OCI-LY7 (cell line): ENCODE measurements at regions of chr20 and their contacts with region 1.

Region 1: DNA sequence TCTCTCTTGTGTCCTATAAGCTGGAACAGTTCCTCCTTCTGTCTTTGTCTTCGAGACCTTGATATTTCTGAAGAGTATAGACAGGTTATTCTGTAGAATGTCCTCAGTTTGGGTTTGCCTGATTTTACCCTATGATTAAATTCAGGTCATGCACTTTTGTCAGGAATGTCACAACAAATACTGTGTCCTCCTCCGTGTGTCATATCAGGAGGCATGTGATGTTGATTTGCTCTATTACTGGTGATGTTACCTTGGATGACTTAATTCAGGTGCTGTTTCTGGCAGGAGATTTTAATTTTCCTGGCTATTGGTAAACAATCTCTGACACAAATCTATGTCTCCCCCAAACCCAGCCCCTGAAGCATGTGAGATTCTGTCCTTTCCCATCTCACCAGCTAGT is 33.3 kb upstream of the CHMP4B start:
- DNase-seq: peak; percentile 20
- H3K4me3 ChIP-seq: no peak overlapping the region
- H3K27ac ChIP-seq: peak overlapping the region; percentile 96
- H3K4me1 ChIP-seq: peaks cover 46% of the 10 kb centered on the region
- CTCF ChIP-seq: no peak

Region 2: GRCh38 chr20:33686100-33686983 is 91.5 kb before region 1 on chr20 and contains the start of gene E2F1:
- CTCF ChIA-PET with region 1: no interaction called
- POLR2A ChIA-PET with region 1: interaction called, 3 read pairs
- intact Hi-C with region 1: loop called (anchors 2 kb)
- DNase-seq: peak; percentile 97
- H3K4me3 ChIP-seq: peak within 1 kb of the TSS; percentile 90
- H3K27ac ChIP-seq: peak within 1 kb of the TSS; percentile 94
- H3K4me1 ChIP-seq: peaks cover 71% of the 10 kb centered on the region
- CTCF ChIP-seq: 0 out of 2 replicates have a peak, but pooled peaks have one; percentile 50
- total RNA-seq, gene E2F1: 128 and 135 TPM in 2 replicates

Region 3: GRCh38 chr20:33810885-33811777 is 33.3 kb after region 1 on chr20 and contains the start of gene CHMP4B:
- CTCF ChIA-PET with region 1: interaction called, 3 read pairs
- POLR2A ChIA-PET with region 1: interaction called, 5 read pairs
- intact Hi-C with region 1: loop called (anchors 1 kb)
- DNase-seq: peak; percentile 98
- H3K4me3 ChIP-seq: peak within 1 kb of the TSS; percentile 92
- H3K27ac ChIP-seq: peak within 1 kb of the TSS; percentile 61
- H3K4me1 ChIP-seq: peaks cover 18% of the 10 kb centered on the region
- CTCF ChIP-seq: no peak
- total RNA-seq, gene CHMP4B: 32.4 and 46.6 TPM in 2 replicates